ENCODE measurements at regions of chr5 and their contacts with region 1.

Region 1: GRCh38 chr5:18881615-18882575 is 1106.1 kb downstream of the CDH18 start:
- DNase-seq: no peak
- H3K4me3 ChIP-seq: no peak overlapping the region
- H3K27ac ChIP-seq: no peak overlapping the region
- H3K4me1 ChIP-seq: no peaks in the 10 kb centered on the region
- H3K27me3 ChIP-seq: no peaks in the 10 kb centered on the region
- CTCF ChIP-seq: no peak

Region 2: GRCh38 chr5:19577882-19578281 is 696.0 kb after region 1 on chr5:
- CTCF ChIA-PET with region 1: no interaction called
- POLR2A ChIA-PET with region 1: interaction called, 12 read pairs
- intact Hi-C with region 1: no loop called
- DNase-seq: no peak
- H3K4me3 ChIP-seq: no peak overlapping the region
- H3K27ac ChIP-seq: no peak overlapping the region
- H3K4me1 ChIP-seq: no peaks in the 10 kb centered on the region
- H3K27me3 ChIP-seq: no peaks in the 10 kb centered on the region
- CTCF ChIP-seq: no peak

Measured in PC-9 (cell line).